Activated CD4-positive, alpha-beta memory T cell treated with anti-CD3 and anti-CD28 coated beads for 36 hours (primary cell): ENCODE measurements at regions of chrX and their contacts with region 1.

Region 1: DNA sequence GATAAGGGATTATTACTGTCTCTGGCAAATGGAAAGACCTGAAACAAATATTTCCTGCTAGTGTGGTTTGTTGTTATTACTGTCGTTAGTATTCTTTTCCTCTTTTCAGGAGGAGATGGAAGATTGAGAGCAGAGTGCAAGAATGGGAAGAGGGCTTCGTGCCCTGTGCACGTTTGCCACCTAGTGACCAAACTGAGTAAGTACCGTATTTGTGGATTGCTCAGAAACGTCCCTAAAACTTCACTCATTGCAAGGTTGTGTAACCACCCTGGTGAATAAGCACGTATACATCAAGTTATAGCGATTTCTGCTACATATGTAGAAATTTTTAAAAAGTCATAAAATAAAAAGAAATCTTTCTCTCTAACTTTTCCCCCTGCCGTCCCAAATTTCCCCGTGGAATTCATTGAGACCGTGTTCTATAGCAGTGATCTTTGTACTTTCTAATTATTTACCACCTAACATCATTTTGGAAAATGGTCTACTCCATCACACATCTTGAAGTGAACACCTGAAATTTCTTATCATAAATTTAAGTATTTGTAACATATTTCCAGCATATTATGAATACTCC is 24.3 kb downstream of the LINC00632 start:
- DNase-seq: peak; percentile 9
- H3K4me3 Mint-ChIP-seq: no peak overlapping the region
- H3K27ac Mint-ChIP-seq: no peak overlapping the region
- H3K4me1 Mint-ChIP-seq: no peaks in the 10 kb centered on the region
- H3K27me3 Mint-ChIP-seq: no peaks in the 10 kb centered on the region

Region 2: DNA sequence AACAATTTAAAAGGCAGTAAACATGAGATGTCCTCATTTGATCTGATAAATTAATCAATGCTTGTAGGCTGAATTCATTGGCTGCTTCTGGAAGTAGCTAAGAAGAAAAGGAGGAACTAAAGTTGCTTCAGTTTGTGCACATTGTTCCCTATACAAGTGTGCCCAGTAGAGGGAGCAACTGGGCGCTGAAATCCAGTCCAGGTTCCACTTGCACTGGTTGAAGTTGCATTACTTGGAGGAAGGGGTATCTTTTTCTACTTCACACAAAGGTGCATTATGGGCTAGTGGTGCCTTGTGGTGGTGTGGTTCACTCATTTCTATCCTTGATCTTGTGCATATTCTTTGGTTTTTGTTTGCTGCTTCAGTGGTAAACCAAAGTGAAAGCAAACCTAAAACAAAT is 161.1 kb before region 1 on chrX:
- CTCF ChIA-PET with region 1: interaction called, 5 read pairs
- POLR2A ChIA-PET with region 1: no interaction called
- intact Hi-C with region 1: loop called (anchors 2 kb)
- DNase-seq: peak; percentile 27
- H3K4me3 Mint-ChIP-seq: no peak overlapping the region
- H3K27ac Mint-ChIP-seq: no peak overlapping the region
- H3K4me1 Mint-ChIP-seq: no peaks in the 10 kb centered on the region
- H3K27me3 Mint-ChIP-seq: no peaks in the 10 kb centered on the region

Region 3: DNA sequence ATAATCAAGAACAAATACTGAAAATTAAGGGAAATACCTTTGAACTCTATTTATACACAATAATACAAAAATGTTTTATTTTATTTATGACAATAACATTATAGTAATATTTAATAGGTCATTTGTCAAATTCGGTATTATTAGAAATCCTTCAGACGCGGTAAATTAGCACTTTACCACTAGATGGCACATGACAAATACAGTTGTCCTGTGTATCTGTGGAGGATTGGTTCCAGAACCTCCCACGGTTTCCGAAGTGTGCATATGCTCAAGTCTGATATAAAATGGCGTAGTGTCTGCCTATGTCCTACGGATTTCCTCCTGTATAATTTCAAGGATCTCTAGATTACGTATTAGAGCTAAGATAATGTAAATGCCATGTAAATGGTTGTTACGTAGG is 32.4 kb before region 1 on chrX:
- CTCF ChIA-PET with region 1: interaction called, 3 read pairs
- POLR2A ChIA-PET with region 1: no interaction called
- intact Hi-C with region 1: loop called (anchors 1 kb)
- DNase-seq: no peak
- H3K4me3 Mint-ChIP-seq: no peak overlapping the region
- H3K27ac Mint-ChIP-seq: no peak overlapping the region
- H3K4me1 Mint-ChIP-seq: no peaks in the 10 kb centered on the region
- H3K27me3 Mint-ChIP-seq: no peaks in the 10 kb centered on the region

Region 4: GRCh38 chrX:140799216-140799615 is 65.4 kb after region 1 on chrX:
- CTCF ChIA-PET with region 1: no interaction called
- POLR2A ChIA-PET with region 1: no interaction called
- intact Hi-C with region 1: no loop called
- DNase-seq: no peak
- H3K4me3 Mint-ChIP-seq: no peak overlapping the region
- H3K27ac Mint-ChIP-seq: no peak overlapping the region
- H3K4me1 Mint-ChIP-seq: no peaks in the 10 kb centered on the region
- H3K27me3 Mint-ChIP-seq: no peaks in the 10 kb centered on the region